ENCODE measurements at regions of chr2 and their contacts with region 1.

Region 1: GRCh38 chr2:99624677-99625076 is 134.9 kb upstream of the REV1 start:
- DNase-seq: no peak
- H3K4me3 ChIP-seq: no peak overlapping the region
- H3K27ac ChIP-seq: no peak overlapping the region
- H3K4me1 ChIP-seq: peaks cover 12% of the 10 kb centered on the region
- CTCF ChIP-seq: no peak

Region 2: DNA sequence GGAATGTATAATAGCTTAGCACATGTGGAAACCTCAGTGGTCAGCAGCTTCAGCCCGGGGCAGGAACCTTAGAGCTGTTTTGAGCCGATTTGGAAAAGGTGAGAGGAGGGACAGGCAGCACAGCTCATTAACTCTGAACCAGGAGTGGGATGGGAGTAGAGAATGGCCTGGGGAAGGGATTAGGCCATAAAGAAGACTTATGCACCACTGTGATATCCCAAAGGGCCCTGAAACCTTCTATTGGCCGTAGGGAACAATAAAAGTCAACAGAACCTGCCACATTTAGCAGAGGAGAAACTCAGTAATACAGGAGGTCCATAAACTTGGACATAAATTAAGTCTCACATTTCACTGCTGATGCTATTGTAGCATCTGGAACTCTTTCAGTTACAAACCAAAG is 10.7 kb before region 1 on chr2:
- CTCF ChIA-PET with region 1: no interaction called
- POLR2A ChIA-PET with region 1: interaction called, 11 read pairs
- intact Hi-C with region 1: no loop called
- DNase-seq: no peak
- H3K4me3 ChIP-seq: no peak overlapping the region
- H3K27ac ChIP-seq: no peak overlapping the region
- H3K4me1 ChIP-seq: peaks cover 7% of the 10 kb centered on the region
- CTCF ChIP-seq: no peak

Region 3: GRCh38 chr2:99648178-99648844 is 23.6 kb after region 1 on chr2:
- CTCF ChIA-PET with region 1: no interaction called
- POLR2A ChIA-PET with region 1: no interaction called
- intact Hi-C with region 1: no loop called
- DNase-seq: no peak
- H3K4me3 ChIP-seq: no peak overlapping the region
- H3K27ac ChIP-seq: no peak overlapping the region
- H3K4me1 ChIP-seq: peaks cover 19% of the 10 kb centered on the region
- CTCF ChIP-seq: no peak